Prostate gland (tissue), 2 donors: ENCODE measurements at regions of chr3 and their contacts with region 1.

Region 1: DNA sequence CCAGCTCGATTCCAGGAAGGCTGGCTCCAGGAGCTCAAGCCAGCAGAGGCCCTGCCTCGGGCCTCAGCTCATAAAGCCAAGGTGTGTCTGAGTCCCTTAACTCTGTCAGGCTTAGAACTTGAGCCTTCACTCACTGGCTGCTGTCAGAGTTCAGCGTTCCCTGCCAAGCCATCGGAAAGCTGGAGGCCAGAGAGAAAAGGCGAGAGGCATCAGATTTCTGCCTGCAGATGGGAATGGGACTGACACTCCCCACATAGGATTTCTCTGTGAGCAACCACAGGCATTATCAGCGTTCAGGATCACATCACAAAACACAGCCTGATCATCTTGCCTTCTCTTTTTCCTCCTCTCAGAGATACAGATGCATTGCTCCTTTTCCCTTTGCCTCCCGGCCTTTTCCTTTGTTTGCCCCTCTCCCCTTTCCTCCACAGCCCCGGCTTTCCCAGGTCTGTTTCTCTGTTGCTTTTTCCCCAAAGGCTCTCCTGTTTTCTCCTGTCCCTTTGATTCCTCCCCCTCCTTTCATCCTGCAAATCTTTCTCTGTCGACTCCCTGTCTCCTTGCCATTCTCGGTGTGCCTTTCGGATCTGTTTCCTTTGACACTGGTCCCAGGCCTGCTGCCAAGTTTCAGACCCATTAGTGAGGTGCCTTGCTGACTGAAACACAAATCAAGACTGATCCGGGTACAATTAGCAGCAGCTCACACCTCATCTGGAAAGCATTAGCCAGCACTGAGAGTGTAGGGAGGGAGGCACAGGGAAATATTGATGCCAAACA is 44.5 kb upstream of the BOC start:
- DNase-seq: peak; percentile 65
- H3K4me3 ChIP-seq: no peak overlapping the region
- H3K27ac ChIP-seq: peak overlapping the region; percentile 51 to 60
- H3K4me1 ChIP-seq: no peaks in the 10 kb centered on the region
- H3K27me3 ChIP-seq: no peaks in the 10 kb centered on the region
- CTCF ChIP-seq: no peak
- POLR2A ChIP-seq: no peak

Region 2: DNA sequence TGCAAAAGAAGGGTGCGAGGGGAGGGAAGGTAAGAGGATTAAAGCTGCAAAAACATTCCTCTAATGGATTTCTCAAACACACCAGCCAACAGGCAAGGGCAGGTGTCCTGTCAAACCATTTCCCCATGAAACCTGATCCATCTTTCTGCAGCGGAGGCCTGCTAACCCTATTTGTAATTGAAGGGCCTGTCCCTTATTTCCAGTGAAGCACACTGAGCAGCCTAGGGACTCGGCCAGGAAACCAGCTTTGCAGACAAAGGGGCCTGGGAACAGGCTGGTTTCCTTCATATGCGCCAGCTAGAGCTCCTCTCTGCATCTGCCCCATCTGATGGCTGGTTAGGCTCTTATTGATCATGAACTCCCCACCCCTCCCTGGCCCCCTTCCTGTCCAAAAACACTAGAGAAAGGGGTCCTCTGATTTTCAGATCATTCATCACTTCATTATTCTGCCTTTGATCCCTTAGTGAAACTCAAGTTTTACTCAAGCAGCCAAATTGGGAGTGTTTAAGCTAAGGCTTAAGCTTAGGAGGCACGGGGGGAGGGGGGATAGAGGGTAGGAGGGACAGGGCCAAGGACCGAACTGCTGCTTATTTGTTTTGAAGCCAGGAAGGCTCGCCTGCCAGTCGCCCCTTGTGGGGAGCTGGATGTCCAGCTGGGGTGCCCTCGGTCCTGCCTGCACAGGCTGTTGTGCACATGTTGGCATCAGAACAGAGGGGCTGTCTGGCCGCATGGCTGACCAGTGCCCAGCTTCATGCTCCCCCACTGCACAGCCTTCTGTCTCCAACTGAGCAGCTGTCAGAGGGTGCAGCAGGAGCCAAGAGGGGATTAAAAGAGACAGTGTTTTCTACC is 97.6 kb after region 1 on chr3:
- intact Hi-C with region 1: loop called (anchors 5 kb)
- DNase-seq: peak; percentile 41
- H3K4me3 ChIP-seq: no peak overlapping the region
- H3K27ac ChIP-seq: peak overlapping the region in 1 of 2 donors; percentile 3
- H3K4me1 ChIP-seq: no peaks in the 10 kb centered on the region
- H3K27me3 ChIP-seq: no peaks in the 10 kb centered on the region
- CTCF ChIP-seq: no peak
- POLR2A ChIP-seq: no peak